HepG2 (cell line): ENCODE measurements at regions of chr3 and their contacts with region 1.

Region 1: GRCh38 chr3:142929109-142929508 is 34.4 kb downstream of the PAQR9 start:
- DNase-seq: peak; percentile 55
- ATAC-seq: peak; percentile 69
- H3K4me3 ChIP-seq: no peak overlapping the region
- H3K27ac ChIP-seq: no peak overlapping the region
- H3K4me1 ChIP-seq: peaks cover 68% of the 10 kb centered on the region
- H3K27me3 ChIP-seq: peaks cover 0 to 12% of the 10 kb centered on the region in 2 experiments; a peak in 3 of 5 replicates
- CTCF ChIP-seq: peak; percentile 78
- EP300 ChIP-seq: no peak
- POLR2A ChIP-seq: no peak
- RAD21 ChIP-seq: peak; percentile 66

Region 2: DNA sequence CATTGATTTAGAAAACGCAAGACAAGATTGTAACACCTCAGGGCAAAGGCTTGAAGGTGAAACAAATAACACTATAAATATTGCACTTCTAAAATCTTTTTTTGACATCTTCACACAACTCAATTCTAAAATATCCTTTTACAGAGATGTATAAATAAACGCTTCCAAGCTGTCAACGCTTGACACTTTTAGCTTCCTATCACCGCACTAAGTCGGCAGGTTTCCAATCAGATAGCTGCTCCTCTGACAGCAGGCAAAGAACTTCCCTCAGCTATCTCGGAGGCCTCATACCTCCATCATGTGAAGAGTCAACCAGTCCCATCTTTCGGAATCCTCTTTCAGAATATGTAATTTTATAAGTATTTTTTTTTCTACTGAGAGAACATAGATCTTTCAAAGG is 111.2 kb before region 1 on chr3:
- CTCF ChIA-PET with region 1: no interaction called
- POLR2A ChIA-PET with region 1: no interaction called
- in situ Hi-C with region 1: no loop called
- intact Hi-C with region 1: no loop called
- DNase-seq: no peak
- ATAC-seq: no peak
- H3K4me3 ChIP-seq: no peak overlapping the region
- H3K27ac ChIP-seq: no peak overlapping the region
- H3K4me1 ChIP-seq: no peaks in the 10 kb centered on the region
- H3K27me3 ChIP-seq: peaks cover 0 to 4% of the 10 kb centered on the region in 2 experiments; a peak in 3 of 5 replicates
- CTCF ChIP-seq: no peak
- EP300 ChIP-seq: no peak
- POLR2A ChIP-seq: no peak
- RAD21 ChIP-seq: no peak

Region 3: GRCh38 chr3:142981108-142981507 is 52.0 kb after region 1 on chr3:
- CTCF ChIA-PET with region 1: interaction called, 67 read pairs
- POLR2A ChIA-PET with region 1: no interaction called
- in situ Hi-C with region 1: loop called (anchors 5 kb)
- intact Hi-C with region 1: no loop called
- DNase-seq: no peak
- ATAC-seq: no peak
- H3K4me3 ChIP-seq: no peak overlapping the region
- H3K27ac ChIP-seq: no peak overlapping the region
- H3K4me1 ChIP-seq: peaks cover 55% of the 10 kb centered on the region
- H3K27me3 ChIP-seq: no peaks in the 10 kb centered on the region
- CTCF ChIP-seq: no peak
- EP300 ChIP-seq: no peak
- POLR2A ChIP-seq: no peak
- RAD21 ChIP-seq: no peak

Region 4: DNA sequence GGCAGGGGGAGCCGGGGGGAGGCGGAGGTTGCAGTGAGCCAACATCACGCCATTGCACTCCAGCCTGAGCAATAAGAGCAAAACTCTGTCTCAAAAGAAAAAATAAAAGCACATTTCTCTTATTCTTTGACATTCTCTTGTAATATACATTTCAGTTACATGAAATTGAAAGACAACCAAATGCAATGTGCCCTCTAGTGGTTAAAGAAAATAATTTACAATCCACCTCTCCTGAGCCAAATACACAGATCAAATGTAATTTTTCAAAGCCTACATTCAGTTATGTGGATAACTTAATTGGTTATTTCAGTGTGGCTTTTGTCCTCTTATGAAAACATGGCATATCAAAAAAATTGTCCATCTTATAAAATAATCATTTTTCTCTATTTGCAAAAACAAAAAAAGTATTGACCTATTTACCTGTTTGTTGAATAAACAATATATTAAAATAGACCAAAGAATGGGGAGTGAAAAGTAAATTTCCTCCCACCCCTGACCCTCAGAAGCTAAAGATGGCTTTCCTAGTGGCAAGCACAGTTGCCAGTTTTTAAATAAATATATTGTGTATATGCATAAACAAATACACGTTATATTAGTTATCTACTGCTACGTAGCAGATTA is 58.1 kb after region 1 on chr3:
- CTCF ChIA-PET with region 1: interaction called, 67 read pairs
- POLR2A ChIA-PET with region 1: no interaction called
- in situ Hi-C with region 1: loop called (anchors 5 kb)
- intact Hi-C with region 1: loop called (anchors 1 kb)
- DNase-seq: peak; percentile 18
- ATAC-seq: peak; percentile 20; the same call in 1 of the 3 replicates
- H3K4me3 ChIP-seq: no peak overlapping the region
- H3K27ac ChIP-seq: no peak overlapping the region
- H3K4me1 ChIP-seq: peaks cover 40% of the 10 kb centered on the region
- H3K27me3 ChIP-seq: peaks cover 0 to 1% of the 10 kb centered on the region in 2 experiments; a peak in 1 of 5 replicates
- CTCF ChIP-seq: peak; percentile 60
- EP300 ChIP-seq: no peak
- POLR2A ChIP-seq: no peak
- RAD21 ChIP-seq: peak; percentile 49; the same call in 1 of the 2 replicates

Region 5: DNA sequence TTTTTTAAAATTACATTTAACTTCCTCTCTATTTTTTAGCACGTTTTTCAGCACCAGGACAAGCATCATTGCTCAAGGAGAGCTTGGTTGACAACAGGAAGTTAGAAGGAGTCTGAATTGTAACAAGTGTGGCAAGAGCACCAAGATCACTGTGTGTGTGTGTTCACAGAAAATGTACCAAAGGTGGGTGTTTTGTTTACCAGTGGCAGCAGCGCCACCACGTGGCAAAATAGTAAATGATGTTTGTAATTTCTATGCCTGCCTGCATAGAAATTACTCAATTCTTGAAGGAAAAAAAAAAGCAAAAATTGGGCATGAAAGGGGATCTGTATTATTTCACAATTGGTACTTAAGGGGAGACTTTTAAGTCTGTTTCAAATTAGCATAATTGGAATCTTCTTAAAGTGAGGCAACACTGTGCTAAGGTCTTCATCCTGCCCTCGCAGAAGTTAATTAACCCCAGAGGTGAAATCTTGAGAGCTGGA is 64.9 kb after region 1 on chr3:
- CTCF ChIA-PET with region 1: interaction called, 34 read pairs
- POLR2A ChIA-PET with region 1: interaction called, 3 read pairs
- in situ Hi-C with region 1: no loop called
- intact Hi-C with region 1: loop called (anchors 1 kb)
- DNase-seq: peak; percentile 66
- ATAC-seq: peak; percentile 66
- H3K4me3 ChIP-seq: no peak overlapping the region
- H3K27ac ChIP-seq: no peak overlapping the region
- H3K4me1 ChIP-seq: peaks cover 53% of the 10 kb centered on the region
- H3K27me3 ChIP-seq: peaks cover 0 to 1% of the 10 kb centered on the region in 2 experiments; a peak in 1 of 5 replicates
- CTCF ChIP-seq: peak; percentile 86
- EP300 ChIP-seq: no peak
- POLR2A ChIP-seq: no peak
- RAD21 ChIP-seq: peak; percentile 67; the same call in 1 of the 2 replicates